Naive thymus-derived CD4-positive, alpha-beta T cell (primary cell): ENCODE measurements at regions of chr2 and their contacts with region 1.

Region 1: DNA sequence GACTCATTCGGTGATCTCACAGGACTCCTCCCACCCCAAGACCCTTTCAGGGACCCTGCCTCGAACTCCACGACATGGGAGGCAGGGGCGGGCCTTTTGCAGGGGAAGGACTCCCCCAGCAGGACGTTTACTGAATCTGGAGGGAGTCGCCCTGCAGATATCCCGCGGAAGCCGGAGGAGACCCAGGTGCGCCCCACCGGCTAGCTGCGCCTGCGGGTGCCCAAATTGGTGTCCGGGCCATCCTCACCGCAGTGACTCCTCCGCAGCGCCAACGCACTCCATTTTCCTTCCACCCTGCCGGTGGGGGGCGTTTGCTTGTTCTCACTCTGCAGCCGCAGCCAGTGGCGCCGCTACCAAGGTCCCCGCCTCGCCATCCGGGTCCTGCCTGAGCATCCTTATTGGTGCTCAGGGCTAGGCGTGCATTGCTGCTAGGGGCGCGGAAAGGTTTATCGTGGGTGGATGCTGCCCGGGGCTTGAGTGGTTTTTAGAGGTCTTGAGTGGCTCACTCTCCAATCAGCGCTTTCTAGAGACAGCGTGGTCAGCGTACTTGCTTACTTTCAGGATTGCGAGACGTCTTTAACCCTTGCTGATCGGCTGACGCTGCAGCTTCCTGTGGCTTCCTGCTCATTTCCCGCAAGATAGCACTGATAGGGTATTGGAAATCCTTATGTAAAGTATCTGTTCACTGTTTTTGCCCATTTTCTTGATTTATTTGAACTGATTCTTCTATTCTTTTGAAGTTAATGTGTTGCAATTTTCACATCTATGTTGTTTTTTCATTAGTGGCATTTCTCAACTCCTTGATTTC is 81.4 kb downstream of the BIN1 start:
- DNase-seq: peak; percentile 51 to 78 (median 72)
- ATAC-seq: peak; percentile 96
- H3K4me3 ChIP-seq: peak overlapping the region; percentile 72
- H3K4me3 Mint-ChIP-seq: peak overlapping the region; percentile 79 to 93 (median 90)
- H3K27ac ChIP-seq: peak overlapping the region; percentile 6
- H3K27ac Mint-ChIP-seq: peak overlapping the region in 6 of 9 donors; percentile 20 to 78 (median 58)
- H3K4me1 ChIP-seq: peaks cover 0 to 8% of the 10 kb centered on the region in 2 donors
- H3K4me1 Mint-ChIP-seq: peaks cover 7 to 14% (median 13%) of the 10 kb centered on the region in 7 donors
- H3K27me3 ChIP-seq: no peaks in the 10 kb centered on the region
- H3K27me3 Mint-ChIP-seq: peaks cover 10 to 54% (median 20%) of the 10 kb centered on the region in 5 donors

Region 2: DNA sequence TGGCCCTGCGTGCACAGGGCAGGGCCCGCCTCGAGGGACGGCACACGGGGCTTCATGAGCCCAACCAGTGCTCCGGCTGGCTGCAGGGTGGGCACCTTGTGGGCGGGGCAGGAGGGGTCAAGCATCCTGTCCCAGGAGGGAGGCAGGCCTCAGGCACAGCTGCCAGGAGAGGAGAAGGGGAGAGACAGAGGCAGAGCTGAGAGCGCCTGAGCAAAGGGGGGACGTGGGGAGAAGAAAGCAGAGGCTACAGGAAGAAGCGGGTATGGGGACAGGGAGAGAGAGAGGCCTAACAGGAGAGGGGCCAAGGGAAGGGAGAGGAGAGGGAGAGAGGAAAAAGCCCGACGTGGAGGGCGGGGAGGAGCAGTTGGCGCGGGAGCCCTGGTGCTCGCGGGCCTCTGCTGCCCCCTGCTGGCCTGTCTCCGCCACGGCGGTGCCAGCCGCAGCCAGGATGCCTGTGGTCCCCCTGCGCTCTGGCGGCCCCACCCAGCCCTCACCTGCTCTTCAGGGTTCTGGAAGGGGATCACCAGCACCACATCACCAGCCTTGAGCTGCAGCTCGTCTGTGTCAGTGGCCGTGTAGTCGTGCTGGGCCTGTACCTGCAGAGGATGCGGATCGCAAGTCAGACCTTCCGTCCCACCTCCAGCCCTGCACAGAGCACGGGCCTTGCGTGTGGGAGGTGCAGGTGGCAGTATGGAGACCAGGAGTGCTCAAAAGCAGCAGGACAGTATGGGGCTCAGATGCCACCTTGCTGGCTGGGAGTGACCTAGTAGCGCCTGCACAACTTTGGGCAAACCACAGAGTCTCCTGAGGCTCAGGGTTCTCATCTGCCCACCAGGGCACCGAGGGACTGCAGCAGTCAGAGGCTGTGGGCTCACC is 24.6 kb after region 1 on chr2:
- CTCF ChIA-PET with region 1: no interaction called
- POLR2A ChIA-PET with region 1: no interaction called
- intact Hi-C with region 1: loop called in 1 of 2 experiments (anchors 1 kb)
- DNase-seq: peak in 8 of 9 donors; percentile 22 to 73 (median 59)
- ATAC-seq: peak; percentile 73
- H3K4me3 ChIP-seq: no peak overlapping the region
- H3K4me3 Mint-ChIP-seq: no peak overlapping the region
- H3K27ac ChIP-seq: peak overlapping the region; percentile 5
- H3K27ac Mint-ChIP-seq: peak overlapping the region in 1 of 9 donors; percentile 38
- H3K4me1 ChIP-seq: no peaks in the 10 kb centered on the region
- H3K4me1 Mint-ChIP-seq: peaks cover 0 to 4% (median 0%) of the 10 kb centered on the region in 7 donors
- H3K27me3 ChIP-seq: no peaks in the 10 kb centered on the region
- H3K27me3 Mint-ChIP-seq: no peaks in the 10 kb centered on the region